ENCODE measurements at regions of chr11 and their contacts with region 1.

Region 1: DNA sequence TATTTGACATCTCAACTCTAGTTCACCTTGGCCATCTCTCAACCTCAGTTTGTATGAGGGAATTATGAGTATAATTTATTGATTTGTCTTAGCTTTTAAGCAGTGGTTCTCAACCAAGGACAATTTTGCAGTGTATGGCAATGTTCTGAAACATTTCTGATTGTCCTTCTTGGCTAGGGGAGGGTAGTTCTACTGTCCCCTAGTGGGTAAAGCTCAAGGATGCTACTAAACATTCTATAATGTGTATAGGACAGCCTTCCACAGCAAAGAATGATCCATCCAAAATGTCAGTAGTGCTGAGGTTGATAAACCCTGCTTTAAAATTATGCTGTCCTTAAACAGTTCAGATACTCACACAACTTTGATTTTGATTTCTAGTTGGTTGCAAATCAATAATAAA is 78.1 kb upstream of the ALKBH3 start:
- DNase-seq: no peak
- H3K4me3 ChIP-seq: no peak overlapping the region
- CTCF ChIP-seq: peak; percentile 25

Region 2: GRCh38 chr11:43619863-43620505 is 182.5 kb before region 1 on chr11:
- CTCF ChIA-PET with region 1: no interaction called
- POLR2A ChIA-PET with region 1: no interaction called
- DNase-seq: no peak
- H3K4me3 ChIP-seq: no peak overlapping the region
- CTCF ChIP-seq: no peak

Region 3: DNA sequence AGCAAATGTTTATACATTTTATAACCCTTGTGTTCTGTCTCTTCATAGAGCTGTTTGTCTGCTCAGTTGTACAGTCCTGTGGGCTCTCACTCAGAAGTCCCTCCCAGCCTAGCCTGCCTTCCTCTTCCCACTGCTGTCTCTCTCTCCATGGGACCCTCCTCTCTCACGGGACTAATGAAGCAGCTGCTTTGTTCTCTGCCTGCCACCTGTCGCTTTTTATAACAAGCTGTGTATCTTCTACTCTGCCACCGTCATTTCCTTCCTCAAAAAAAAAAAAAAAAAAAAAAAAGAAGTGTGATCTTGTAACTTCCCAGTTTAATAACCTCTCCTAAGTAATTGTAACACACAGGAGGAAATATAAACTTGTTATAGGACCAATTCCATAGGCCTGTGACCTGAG is 14.1 kb before region 1 on chr11:
- CTCF ChIA-PET with region 1: interaction called, 18 read pairs
- POLR2A ChIA-PET with region 1: interaction called, 4 read pairs
- DNase-seq: no peak
- H3K4me3 ChIP-seq: no peak overlapping the region
- CTCF ChIP-seq: no peak

Measured in AG04449 (cell line).